K562 (cell line): ENCODE measurements at regions of chr17 and their contacts with region 1.

Region 1: DNA sequence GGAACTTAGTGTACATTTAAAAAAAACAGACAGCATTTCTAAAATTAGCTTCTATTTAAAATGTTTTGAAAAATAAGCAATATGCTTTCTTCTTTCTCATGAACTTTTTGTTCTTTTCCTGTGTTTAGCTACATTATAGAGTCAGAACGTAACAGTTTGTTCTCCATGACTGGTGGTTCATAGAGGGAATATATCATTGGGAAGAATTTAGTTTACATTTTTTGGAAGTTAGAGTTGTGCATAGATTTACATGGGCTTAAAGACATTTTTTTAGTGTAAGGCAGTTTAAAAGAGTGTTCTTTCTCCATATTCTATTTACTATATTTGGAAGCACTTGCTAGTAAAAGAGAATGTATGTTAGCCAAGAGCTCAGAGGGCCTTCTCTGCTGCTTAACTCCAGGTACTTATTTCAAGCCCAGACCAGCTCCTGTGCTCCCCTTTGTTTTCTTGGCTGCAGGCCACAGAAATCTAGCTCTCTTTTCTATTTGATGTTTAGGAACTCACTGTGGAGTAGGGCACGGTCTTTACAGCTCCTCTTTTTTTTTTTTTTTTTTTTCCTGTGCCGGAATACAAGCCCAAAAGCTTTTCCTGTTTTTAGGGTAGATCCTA is 20.2 kb downstream of the AP2B1 start:
- DNase-seq: no peak
- ATAC-seq: no peak
- H3K4me3 ChIP-seq: no peak overlapping the region
- H3K27ac ChIP-seq: no peak overlapping the region
- H3K4me1 ChIP-seq: no peaks in the 10 kb centered on the region
- H3K27me3 ChIP-seq: no peaks in the 10 kb centered on the region
- CTCF ChIP-seq: no peak
- EP300 ChIP-seq: no peak
- POLR2A ChIP-seq: no peak
- RAD21 ChIP-seq: no peak

Region 2: DNA sequence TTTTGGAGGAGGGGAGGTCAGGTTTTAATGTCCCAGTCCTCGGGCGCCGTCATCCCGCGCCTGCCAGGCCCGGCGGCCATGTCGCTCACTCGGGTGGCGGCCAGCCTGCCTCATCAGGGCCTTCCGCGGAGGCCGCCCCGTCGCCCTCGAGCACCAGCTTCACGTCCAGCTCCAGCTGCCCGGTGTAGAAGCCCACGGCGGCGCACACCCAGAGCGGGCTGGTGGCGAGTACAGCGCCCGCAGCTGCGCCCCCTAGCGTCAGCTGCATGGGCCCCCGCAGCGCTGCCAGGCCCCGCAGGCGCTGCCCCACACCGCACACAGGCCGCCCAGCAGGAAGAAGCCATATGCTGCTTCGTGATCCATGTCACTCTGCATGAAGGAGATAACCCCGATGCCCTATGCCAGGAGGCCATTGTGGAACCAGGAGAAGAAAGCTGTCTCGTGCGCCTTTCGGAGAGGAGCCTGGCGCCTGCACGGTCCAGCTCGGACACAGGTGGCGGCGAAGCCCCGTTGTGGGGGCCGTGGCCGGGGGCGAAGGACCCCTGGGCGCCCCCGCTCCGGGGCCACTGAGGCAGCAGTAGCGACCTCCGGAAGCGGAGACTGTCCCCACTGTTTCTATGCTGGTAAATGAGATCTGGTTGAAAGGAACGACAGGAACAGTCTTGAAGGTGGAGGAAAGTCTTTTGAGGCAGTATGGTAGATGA is 10.7 kb before region 1 on chr17:
- CTCF ChIA-PET with region 1: no interaction called
- POLR2A ChIA-PET with region 1: interaction called, 30 read pairs
- in situ Hi-C with region 1: no loop called
- intact Hi-C with region 1: no loop called
- DNase-seq: no peak
- ATAC-seq: peak; percentile 42; the same call in 2 of the 3 replicates
- H3K4me3 ChIP-seq: no peak overlapping the region
- H3K27ac ChIP-seq: no peak overlapping the region
- H3K4me1 ChIP-seq: peaks cover 0 to 7% of the 10 kb centered on the region in 2 experiments; a peak in 1 of 5 replicates
- H3K27me3 ChIP-seq: no peaks in the 10 kb centered on the region
- CTCF ChIP-seq: no peak
- EP300 ChIP-seq: no peak
- POLR2A ChIP-seq: 0 out of 2 replicates have a peak, but pooled peaks have one; percentile 8
- RAD21 ChIP-seq: no peak

Region 3: GRCh38 chr17:36496018-36496789 is 888.9 kb after region 1 on chr17:
- CTCF ChIA-PET with region 1: no interaction called
- POLR2A ChIA-PET with region 1: no interaction called
- in situ Hi-C with region 1: no loop called
- intact Hi-C with region 1: no loop called
- DNase-seq: peak in 2 of 4 experiments; percentile 9 to 12
- ATAC-seq: no peak; the same call in 2 of the 3 replicates
- H3K4me3 ChIP-seq: no peak overlapping the region
- H3K27ac ChIP-seq: no peak overlapping the region
- H3K4me1 ChIP-seq: no peaks in the 10 kb centered on the region; a peak in 2 of 5 replicates
- H3K27me3 ChIP-seq: no peaks in the 10 kb centered on the region
- CTCF ChIP-seq: no peak
- EP300 ChIP-seq: no peak
- POLR2A ChIP-seq: peak; percentile 50
- RAD21 ChIP-seq: no peak